ENCODE measurements at regions of chr9 and their contacts with region 1.

Region 1: GRCh38 chr9:6049798-6050197 is 34.4 kb upstream of the RANBP6 start:
- DNase-seq: peak; percentile 48
- H3K4me3 ChIP-seq: no peak overlapping the region
- H3K27ac ChIP-seq: no peak overlapping the region
- H3K4me1 ChIP-seq: peaks cover 7% of the 10 kb centered on the region
- H3K27me3 ChIP-seq: no peaks in the 10 kb centered on the region
- CTCF ChIP-seq: peak; percentile 61 to 73

Region 2: DNA sequence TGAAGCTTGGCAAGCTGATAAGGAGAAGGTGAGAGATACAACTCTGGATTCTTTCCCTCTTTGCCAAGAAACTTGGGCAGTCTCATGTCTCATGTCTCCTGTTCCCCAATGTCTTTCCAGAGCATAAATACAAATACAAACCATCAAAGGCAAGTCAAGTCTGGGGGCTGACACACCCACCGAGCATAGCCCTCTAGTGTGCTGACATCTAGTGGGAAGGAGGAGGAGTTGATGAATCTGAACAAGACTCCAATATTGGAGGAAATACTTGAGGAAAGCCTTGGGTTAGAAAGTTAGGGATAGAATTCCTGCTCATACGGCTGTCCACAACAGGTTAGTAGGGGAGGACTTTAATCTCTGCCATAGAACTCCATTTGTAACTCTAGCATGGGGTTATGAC is 150.5 kb before region 1 on chr9:
- CTCF ChIA-PET with region 1: no interaction called
- dilution Hi-C with region 1: loop called (anchors 10 kb)
- in situ Hi-C with region 1: no loop called
- intact Hi-C with region 1: no loop called
- DNase-seq: no peak
- H3K4me3 ChIP-seq: no peak overlapping the region
- H3K27ac ChIP-seq: no peak overlapping the region
- H3K4me1 ChIP-seq: no peaks in the 10 kb centered on the region
- H3K27me3 ChIP-seq: no peaks in the 10 kb centered on the region
- CTCF ChIP-seq: peak in 1 of 2 donors; percentile 19

Region 3: GRCh38 chr9:5920860-5921328 is 128.9 kb before region 1 on chr9:
- CTCF ChIA-PET with region 1: no interaction called
- dilution Hi-C with region 1: no loop called
- in situ Hi-C with region 1: no loop called
- intact Hi-C with region 1: no loop called
- DNase-seq: no peak
- H3K4me3 ChIP-seq: no peak overlapping the region
- H3K27ac ChIP-seq: no peak overlapping the region
- H3K4me1 ChIP-seq: no peaks in the 10 kb centered on the region
- H3K27me3 ChIP-seq: no peaks in the 10 kb centered on the region
- CTCF ChIP-seq: no peak

Region 4: GRCh38 chr9:6383551-6384225 is 333.9 kb after region 1 on chr9:
- CTCF ChIA-PET with region 1: no interaction called
- dilution Hi-C with region 1: no loop called
- in situ Hi-C with region 1: no loop called
- intact Hi-C with region 1: no loop called
- DNase-seq: peak; percentile 32
- H3K4me3 ChIP-seq: no peak overlapping the region
- H3K27ac ChIP-seq: no peak overlapping the region
- H3K4me1 ChIP-seq: no peaks in the 10 kb centered on the region
- H3K27me3 ChIP-seq: no peaks in the 10 kb centered on the region
- CTCF ChIP-seq: no peak

Region 5: GRCh38 chr9:6552033-6552432 is 502.2 kb after region 1 on chr9:
- CTCF ChIA-PET with region 1: no interaction called
- dilution Hi-C with region 1: no loop called
- in situ Hi-C with region 1: no loop called
- intact Hi-C with region 1: no loop called
- DNase-seq: no peak
- H3K4me3 ChIP-seq: no peak overlapping the region
- H3K27ac ChIP-seq: no peak overlapping the region
- H3K4me1 ChIP-seq: peaks cover 17% of the 10 kb centered on the region
- H3K27me3 ChIP-seq: no peaks in the 10 kb centered on the region
- CTCF ChIP-seq: peak in 1 of 2 donors; percentile 8